Posterior vena cava (tissue), 2 donors: ENCODE measurements at regions of chr5 and their contacts with region 1.

Region 1: GRCh38 chr5:132725745-132726144 is 11.6 kb downstream of the KIF3A start:
- DNase-seq: no peak

Region 2: DNA sequence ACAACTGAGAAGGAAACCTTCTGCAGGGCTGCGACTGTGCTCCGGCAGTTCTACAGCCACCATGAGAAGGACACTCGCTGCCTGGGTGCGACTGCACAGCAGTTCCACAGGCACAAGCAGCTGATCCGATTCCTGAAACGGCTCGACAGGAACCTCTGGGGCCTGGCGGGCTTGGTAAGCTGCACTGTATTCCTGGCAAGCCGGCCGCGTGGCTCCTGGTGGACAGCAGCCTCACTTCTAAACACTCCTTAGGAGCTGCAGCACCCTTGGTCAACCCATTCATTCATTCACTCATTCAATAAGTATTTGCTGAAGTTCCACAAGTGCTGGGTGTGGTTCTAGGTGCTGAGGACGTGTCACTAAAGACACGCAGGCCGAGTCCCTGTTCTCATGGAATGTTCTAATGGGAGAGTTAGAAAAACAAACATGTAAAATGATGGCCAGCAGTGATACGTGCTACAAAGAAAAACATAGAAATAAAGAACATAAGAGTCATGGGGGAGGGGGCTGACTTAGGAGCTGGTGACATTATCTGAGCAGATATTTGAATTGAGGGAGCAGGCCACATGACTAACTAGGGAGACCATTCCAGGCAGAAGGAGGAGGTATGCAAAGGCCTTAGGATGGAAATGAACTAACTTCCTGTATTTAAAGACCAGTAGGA is 45.9 kb before region 1 on chr5:
- intact Hi-C with region 1: loop called in 1 of 2 experiments (anchors 2 kb)
- DNase-seq: peak; percentile 53